ENCODE measurements at regions of chr15 and their contacts with region 1.

Region 1: GRCh38 chr15:66851226-66852071 is 149.4 kb downstream of the SMAD6 start:
- DNase-seq: peak; percentile 85
- ATAC-seq: peak; percentile 99
- H3K4me3 Mint-ChIP-seq: peak overlapping the region; percentile 7
- H3K27ac Mint-ChIP-seq: no peak overlapping the region
- H3K4me1 Mint-ChIP-seq: peaks cover 2% of the 10 kb centered on the region
- H3K27me3 Mint-ChIP-seq: peaks cover 7% of the 10 kb centered on the region
- CTCF ChIP-seq: peak; percentile 91

Region 2: DNA sequence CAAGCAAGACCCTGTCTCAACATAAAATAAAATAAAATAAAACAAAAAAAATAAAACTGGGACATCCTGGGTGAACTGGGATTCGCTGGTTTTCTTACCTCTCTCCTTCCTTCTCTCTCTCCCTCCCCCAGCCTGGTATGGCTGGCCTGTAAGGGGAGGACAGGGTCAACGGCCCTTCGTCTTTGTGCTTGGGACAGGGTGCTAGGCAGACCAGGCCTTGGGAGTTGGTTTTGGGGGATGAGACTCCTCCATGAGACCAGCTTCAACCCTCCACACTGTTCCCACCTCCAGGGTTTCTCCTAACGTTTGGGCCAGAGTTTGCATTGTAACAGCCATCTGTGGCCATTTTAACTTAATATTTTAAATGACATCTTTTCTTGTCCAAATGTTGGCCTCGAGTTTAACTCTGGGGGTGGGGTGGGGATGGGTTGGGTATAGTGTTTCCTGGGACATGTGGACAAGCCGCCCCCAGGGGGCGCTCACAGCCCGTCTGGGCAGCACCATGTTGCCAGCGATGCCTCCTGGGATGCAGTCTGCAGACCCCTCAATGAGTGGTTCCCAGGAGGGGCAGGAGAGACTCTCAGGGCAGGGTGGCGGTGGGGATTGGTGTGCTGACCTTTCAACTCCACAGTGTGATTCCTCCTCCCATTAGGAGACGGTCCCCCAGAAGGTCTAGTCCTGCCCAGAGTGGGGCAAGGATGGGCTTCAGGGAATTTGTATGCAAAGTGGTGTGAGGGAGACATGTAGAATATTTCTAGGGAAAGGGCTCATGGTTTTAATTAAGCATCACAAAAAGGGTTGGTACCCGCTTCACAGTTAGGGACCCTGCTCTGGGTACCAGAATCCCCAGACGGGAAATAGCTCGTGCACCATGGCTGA is 247.9 kb before region 1 on chr15:
- CTCF ChIA-PET with region 1: interaction called, 52 read pairs
- POLR2A ChIA-PET with region 1: no interaction called
- intact Hi-C with region 1: loop called (anchors 2 kb)
- DNase-seq: peak; percentile 72
- ATAC-seq: peak; percentile 80
- H3K4me3 Mint-ChIP-seq: no peak overlapping the region
- H3K27ac Mint-ChIP-seq: no peak overlapping the region
- H3K4me1 Mint-ChIP-seq: peaks cover 1% of the 10 kb centered on the region
- H3K27me3 Mint-ChIP-seq: no peaks in the 10 kb centered on the region
- CTCF ChIP-seq: peak; percentile 89

Region 3: GRCh38 chr15:66619151-66619903 is 232.1 kb before region 1 on chr15:
- CTCF ChIA-PET with region 1: interaction called, 27 read pairs
- POLR2A ChIA-PET with region 1: no interaction called
- intact Hi-C with region 1: no loop called
- DNase-seq: peak; percentile 68
- ATAC-seq: peak; percentile 87
- H3K4me3 Mint-ChIP-seq: no peak overlapping the region
- H3K27ac Mint-ChIP-seq: no peak overlapping the region
- H3K4me1 Mint-ChIP-seq: no peaks in the 10 kb centered on the region
- H3K27me3 Mint-ChIP-seq: peaks cover 17% of the 10 kb centered on the region
- CTCF ChIP-seq: peak; percentile 91

Region 4: GRCh38 chr15:66703540-66703941 is 147.9 kb before region 1 on chr15:
- CTCF ChIA-PET with region 1: interaction called, 15 read pairs
- POLR2A ChIA-PET with region 1: no interaction called
- intact Hi-C with region 1: no loop called
- DNase-seq: peak; percentile 31
- ATAC-seq: no peak
- H3K4me3 Mint-ChIP-seq: no peak overlapping the region
- H3K27ac Mint-ChIP-seq: no peak overlapping the region
- H3K4me1 Mint-ChIP-seq: peaks cover 11% of the 10 kb centered on the region
- H3K27me3 Mint-ChIP-seq: peaks cover 21% of the 10 kb centered on the region
- CTCF ChIP-seq: no peak

Region 5: DNA sequence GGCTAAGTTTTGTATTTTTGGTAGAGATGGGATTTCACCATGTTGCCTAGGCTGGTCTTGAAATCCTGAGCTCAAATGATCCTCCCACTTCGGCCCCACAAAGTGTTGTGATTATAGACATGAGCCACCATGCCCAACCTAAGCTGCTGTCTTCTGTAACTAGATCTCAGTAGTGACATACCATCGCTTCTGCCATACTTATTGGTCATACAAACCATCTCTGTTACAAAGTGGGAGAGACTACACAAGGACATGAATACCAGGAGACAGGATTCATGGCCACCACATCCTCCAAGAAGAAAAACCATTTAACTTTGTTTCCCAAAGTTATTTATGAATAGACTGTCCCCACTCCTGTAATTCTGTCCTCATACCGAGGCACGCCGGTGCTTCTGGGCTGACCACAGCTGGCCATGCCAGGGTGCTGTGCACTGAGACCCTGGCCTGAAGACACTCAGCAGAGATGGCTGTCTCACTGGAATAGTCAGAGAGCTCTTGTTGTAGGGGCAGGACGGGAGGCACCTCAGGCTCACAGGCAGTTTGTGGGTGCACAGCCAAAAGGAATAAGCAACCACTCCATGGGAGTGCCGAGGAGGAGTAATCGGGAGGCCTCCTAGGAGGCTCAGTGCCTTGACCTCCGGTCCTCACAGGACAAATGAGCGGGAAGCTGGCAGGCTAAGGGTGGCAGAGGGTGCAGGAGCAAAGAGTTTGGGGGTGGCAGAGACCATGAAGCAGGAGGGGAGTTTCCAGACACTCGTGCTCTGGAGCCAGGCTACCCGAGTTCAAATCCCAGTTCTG is 67.9 kb before region 1 on chr15:
- CTCF ChIA-PET with region 1: interaction called, 12 read pairs
- POLR2A ChIA-PET with region 1: no interaction called
- intact Hi-C with region 1: no loop called
- DNase-seq: no peak
- ATAC-seq: no peak
- H3K4me3 Mint-ChIP-seq: no peak overlapping the region
- H3K27ac Mint-ChIP-seq: no peak overlapping the region
- H3K4me1 Mint-ChIP-seq: no peaks in the 10 kb centered on the region
- H3K27me3 Mint-ChIP-seq: no peaks in the 10 kb centered on the region
- CTCF ChIP-seq: no peak

Region 6: GRCh38 chr15:66838671-66839239 is 12.7 kb before region 1 on chr15:
- CTCF ChIA-PET with region 1: interaction called, 57 read pairs
- POLR2A ChIA-PET with region 1: no interaction called
- intact Hi-C with region 1: no loop called
- DNase-seq: no peak
- ATAC-seq: no peak
- H3K4me3 Mint-ChIP-seq: no peak overlapping the region
- H3K27ac Mint-ChIP-seq: no peak overlapping the region
- H3K4me1 Mint-ChIP-seq: peaks cover 5% of the 10 kb centered on the region
- H3K27me3 Mint-ChIP-seq: peaks cover 24% of the 10 kb centered on the region
- CTCF ChIP-seq: peak; percentile 44

Region 7: GRCh38 chr15:66883322-66883911 is 32.0 kb after region 1 on chr15:
- CTCF ChIA-PET with region 1: no interaction called
- POLR2A ChIA-PET with region 1: no interaction called
- intact Hi-C with region 1: no loop called
- DNase-seq: no peak
- ATAC-seq: no peak
- H3K4me3 Mint-ChIP-seq: no peak overlapping the region
- H3K27ac Mint-ChIP-seq: no peak overlapping the region
- H3K4me1 Mint-ChIP-seq: peaks cover 2% of the 10 kb centered on the region
- H3K27me3 Mint-ChIP-seq: no peaks in the 10 kb centered on the region
- CTCF ChIP-seq: no peak

Measured in activated CD8-positive, alpha-beta T cell treated with anti-CD3 and anti-CD28 coated beads for 36 hours (primary cell).